PC-9 (cell line): ENCODE measurements at regions of chr10 and their contacts with region 1.

Region 1: GRCh38 chr10:24866604-24867583 is 85.5 kb downstream of the PRTFDC1 start:
- DNase-seq: no peak
- H3K4me3 ChIP-seq: no peak overlapping the region
- H3K27ac ChIP-seq: no peak overlapping the region
- H3K4me1 ChIP-seq: peaks cover 19% of the 10 kb centered on the region
- H3K27me3 ChIP-seq: no peaks in the 10 kb centered on the region
- CTCF ChIP-seq: no peak

Region 2: DNA sequence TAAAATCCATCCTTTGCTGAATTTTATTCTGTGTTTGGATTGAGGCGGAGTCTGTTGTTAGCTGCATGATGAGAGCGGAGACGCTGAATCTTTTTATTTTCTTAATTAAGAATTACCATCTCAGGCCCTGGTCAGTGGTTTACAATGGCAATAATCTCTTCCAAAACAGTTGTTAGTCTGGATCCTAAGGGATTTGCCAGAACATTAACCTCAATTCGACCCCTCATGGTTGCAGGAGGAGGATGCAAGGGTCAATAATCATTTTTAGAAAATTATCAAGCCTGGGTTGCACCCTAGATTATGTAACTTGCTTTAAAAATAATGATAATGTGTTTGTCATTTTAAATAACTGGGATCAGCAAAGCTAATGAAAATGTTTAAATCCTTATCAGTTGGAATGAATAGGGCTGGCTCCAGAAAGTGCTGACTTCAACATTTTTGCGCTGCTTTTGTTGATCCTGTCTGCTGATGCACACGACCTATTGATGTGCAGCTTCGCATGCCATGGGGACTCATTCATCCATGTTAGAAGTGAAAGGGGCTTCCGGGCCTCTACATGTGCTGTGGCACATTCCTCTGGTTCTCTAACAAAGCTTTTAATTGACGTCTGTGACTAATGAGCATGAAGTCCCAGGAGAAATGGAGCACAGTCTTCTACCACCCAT is 738.7 kb before region 1 on chr10:
- CTCF ChIA-PET with region 1: no interaction called
- POLR2A ChIA-PET with region 1: no interaction called
- intact Hi-C with region 1: no loop called
- DNase-seq: no peak
- H3K4me3 ChIP-seq: no peak overlapping the region
- H3K27ac ChIP-seq: no peak overlapping the region
- H3K4me1 ChIP-seq: no peaks in the 10 kb centered on the region
- H3K27me3 ChIP-seq: no peaks in the 10 kb centered on the region
- CTCF ChIP-seq: no peak

Region 3: DNA sequence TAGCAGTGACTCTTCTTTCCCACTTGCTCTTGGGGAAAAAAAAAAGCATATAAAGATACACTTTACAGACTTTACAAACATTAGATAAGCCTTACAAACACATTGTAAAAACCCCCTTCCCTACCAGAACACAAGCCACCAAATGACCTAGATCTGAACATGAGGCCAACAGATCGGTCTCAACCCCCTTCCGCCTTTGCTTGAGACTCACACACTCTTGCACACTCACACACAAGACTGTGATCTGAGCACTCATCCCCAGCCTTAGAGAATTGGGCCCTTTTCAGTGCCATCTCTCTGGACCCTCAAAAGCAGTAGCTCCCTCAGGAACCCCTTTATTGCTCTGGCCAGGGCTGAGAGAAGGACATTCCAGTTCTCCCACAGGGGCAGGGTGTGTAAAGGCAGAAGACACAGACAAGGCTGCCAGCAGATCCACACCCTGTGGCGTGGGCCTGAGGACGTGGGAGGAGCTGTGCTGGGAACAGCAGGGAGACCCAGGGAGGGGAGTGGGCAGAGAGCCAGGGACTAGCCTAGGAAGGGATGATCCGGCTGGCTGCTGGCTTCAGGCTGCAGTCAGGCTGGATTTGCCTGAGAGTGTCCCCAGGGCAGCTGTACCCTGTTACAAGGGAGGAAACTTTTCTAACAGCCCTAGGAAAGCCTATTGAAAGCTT is 451.3 kb before region 1 on chr10:
- CTCF ChIA-PET with region 1: no interaction called
- POLR2A ChIA-PET with region 1: no interaction called
- intact Hi-C with region 1: no loop called
- DNase-seq: peak in 1 of 2 experiments; percentile 49
- H3K4me3 ChIP-seq: no peak overlapping the region
- H3K27ac ChIP-seq: no peak overlapping the region
- H3K4me1 ChIP-seq: no peaks in the 10 kb centered on the region
- H3K27me3 ChIP-seq: no peaks in the 10 kb centered on the region
- CTCF ChIP-seq: no peak

Region 4: GRCh38 chr10:24617771-24618391 is 249.0 kb before region 1 on chr10:
- CTCF ChIA-PET with region 1: no interaction called
- POLR2A ChIA-PET with region 1: interaction called, 20 read pairs
- intact Hi-C with region 1: no loop called
- DNase-seq: peak in 1 of 2 experiments; percentile 42
- H3K4me3 ChIP-seq: no peak overlapping the region
- H3K27ac ChIP-seq: peak overlapping the region; percentile 71
- H3K4me1 ChIP-seq: peaks cover 8% of the 10 kb centered on the region; the same call in 1 of the 2 replicates
- H3K27me3 ChIP-seq: no peaks in the 10 kb centered on the region
- CTCF ChIP-seq: peak; percentile 81